ENCODE measurements at regions of chr7 and their contacts with region 1.

Region 1: GRCh38 chr7:70829221-70830059 is 302.5 kb upstream of the GALNT17 start:
- DNase-seq: peak; percentile 74
- CTCF ChIP-seq: peak; percentile 79

Region 2: GRCh38 chr7:71182438-71182935 is 353.0 kb after region 1 on chr7:
- in situ Hi-C with region 1: no loop called
- DNase-seq: no peak
- CTCF ChIP-seq: no peak

Region 3: DNA sequence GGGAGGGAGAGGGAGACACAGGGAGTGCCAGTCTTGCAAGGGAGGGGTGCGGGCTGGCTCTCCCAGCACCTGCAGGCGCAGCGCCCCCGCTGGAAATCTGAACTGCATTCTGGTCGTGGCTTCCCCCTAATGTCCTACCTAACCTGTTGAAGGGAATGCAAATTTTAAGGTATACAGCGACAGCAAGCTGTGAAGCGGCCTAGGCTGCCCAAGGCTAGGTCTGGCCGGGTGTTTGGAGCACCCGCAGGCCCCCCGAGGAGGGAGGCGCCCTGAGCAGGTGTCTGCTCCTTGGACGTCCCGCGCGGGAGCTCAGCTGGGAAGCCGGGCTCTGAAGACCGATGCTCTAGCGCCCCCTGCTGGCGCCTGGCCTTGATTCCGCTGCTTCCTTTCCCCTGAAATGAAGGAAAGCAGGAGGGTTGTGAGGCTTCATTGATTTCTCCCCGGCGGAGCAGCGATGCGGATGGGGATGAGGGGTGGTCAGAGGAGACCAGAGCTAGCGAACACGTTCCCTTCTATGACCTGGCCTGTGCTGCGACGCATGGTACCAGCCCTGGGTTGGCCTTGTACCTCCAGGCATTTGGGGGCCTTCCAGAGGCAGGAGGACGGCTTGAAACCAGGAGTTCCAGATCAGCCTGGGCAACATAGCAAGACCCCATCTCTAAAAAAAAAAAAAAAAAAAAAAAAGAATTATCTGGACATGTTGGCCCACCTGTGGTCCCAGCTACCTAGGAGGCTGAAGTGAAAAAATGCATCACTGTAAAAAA is 903.8 kb after region 1 on chr7:
- in situ Hi-C with region 1: loop called (anchors 25 kb)
- DNase-seq: peak; percentile 85
- CTCF ChIP-seq: peak; percentile 84